PC-9 (cell line): ENCODE measurements at regions of chr14 and their contacts with region 1.

Region 1: GRCh38 chr14:69153131-69153872 is 383 bp upstream of the DCAF5 start:
- DNase-seq: peak; percentile 83 to 92
- H3K4me3 ChIP-seq: peak overlapping the region; percentile 95
- H3K27ac ChIP-seq: no peak overlapping the region
- H3K4me1 ChIP-seq: peaks cover 17% of the 10 kb centered on the region
- H3K27me3 ChIP-seq: no peaks in the 10 kb centered on the region
- CTCF ChIP-seq: no peak

Region 2: DNA sequence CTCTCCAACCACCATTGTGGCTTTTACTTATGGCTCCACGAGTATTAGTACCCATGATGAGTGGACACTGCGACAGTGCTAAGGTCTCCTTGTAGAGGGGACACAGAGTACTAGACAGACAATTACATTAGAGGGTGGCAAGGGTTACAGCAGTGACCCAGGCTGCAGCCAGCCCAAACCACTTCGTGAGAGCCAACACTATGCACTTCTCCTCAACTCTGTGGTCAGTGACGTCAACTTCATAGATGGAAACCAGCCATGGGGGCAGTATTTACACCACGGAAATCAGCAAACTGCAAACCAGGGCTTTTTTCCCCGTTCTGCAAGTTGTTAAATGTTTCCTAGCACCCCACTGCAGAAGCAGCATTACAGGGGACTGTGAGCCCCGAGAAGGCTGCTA is 298.9 kb before region 1 on chr14:
- CTCF ChIA-PET with region 1: no interaction called
- POLR2A ChIA-PET with region 1: no interaction called
- intact Hi-C with region 1: no loop called
- DNase-seq: no peak
- H3K4me3 ChIP-seq: no peak overlapping the region
- H3K27ac ChIP-seq: no peak overlapping the region
- H3K4me1 ChIP-seq: peaks cover 24% of the 10 kb centered on the region
- H3K27me3 ChIP-seq: no peaks in the 10 kb centered on the region
- CTCF ChIP-seq: no peak

Region 3: DNA sequence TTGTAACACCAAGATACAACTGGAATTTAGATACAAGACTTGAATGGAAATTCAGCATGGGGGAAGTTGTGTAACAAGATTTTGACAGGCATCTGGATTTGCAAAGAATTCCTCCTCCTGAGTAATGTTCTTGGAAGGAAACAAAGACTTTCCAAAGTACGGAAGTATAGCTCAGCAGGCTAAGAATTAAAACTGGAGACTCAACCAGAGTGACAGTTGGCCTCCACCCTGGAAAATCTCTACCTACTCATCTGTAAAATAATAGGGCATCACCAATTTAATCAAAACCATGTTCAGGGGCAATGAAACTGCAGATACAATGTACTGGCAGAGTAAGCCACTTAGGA is 15.1 kb before region 1 on chr14:
- CTCF ChIA-PET with region 1: interaction called, 13 read pairs
- POLR2A ChIA-PET with region 1: no interaction called
- intact Hi-C with region 1: no loop called
- DNase-seq: no peak
- H3K4me3 ChIP-seq: no peak overlapping the region
- H3K27ac ChIP-seq: no peak overlapping the region
- H3K4me1 ChIP-seq: peaks cover 15% of the 10 kb centered on the region
- H3K27me3 ChIP-seq: no peaks in the 10 kb centered on the region
- CTCF ChIP-seq: no peak

Region 4: DNA sequence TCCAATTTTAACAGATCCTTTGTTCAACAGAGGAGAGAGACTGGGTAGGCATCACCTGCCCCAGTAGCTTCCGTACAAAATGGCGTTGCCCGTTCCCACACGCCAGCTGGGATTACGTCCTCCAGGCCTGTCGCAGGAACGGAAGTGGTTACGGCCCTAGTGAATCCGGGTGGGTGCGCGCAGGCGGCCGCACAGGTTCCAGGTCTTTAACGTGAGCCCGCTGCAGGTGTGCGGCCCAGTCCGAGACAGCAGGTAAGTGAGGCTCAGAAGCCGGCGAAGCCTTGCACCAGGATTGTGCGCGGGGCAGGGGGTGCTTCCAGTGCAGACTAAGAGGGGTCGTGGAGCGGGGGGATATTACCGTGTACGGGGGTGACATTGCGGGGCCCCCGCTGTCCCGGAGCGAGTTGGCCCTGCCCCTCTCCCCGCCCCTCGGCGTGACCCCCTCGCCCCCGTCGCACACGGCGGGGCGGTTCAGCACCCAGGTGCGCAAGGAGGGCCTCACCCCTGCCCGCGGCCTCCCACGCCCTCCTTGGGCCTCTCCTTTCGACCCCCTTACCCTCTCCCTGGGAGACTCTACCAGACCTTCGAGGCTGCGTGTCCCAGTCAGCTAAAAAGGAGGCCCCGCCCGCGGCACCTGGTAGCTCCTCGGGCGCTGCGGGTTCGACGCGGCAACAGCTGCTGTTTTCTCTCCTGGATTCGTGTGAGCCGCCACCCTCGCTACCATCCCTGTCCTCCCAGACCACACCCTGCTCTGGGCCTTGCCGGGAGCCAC is 38.2 kb after region 1 on chr14 and contains the start of gene EXD2:
- CTCF ChIA-PET with region 1: no interaction called
- POLR2A ChIA-PET with region 1: interaction called, 3 read pairs
- intact Hi-C with region 1: loop called (anchors 2 kb)
- DNase-seq: peak; percentile 89 to 93
- H3K4me3 ChIP-seq: peak within 1 kb of the TSS; percentile 67
- H3K27ac ChIP-seq: peak within 1 kb of the TSS; percentile 36
- H3K4me1 ChIP-seq: peaks cover 16% of the 10 kb centered on the region
- H3K27me3 ChIP-seq: no peaks in the 10 kb centered on the region
- CTCF ChIP-seq: no peak
- total RNA-seq, gene EXD2: 21.4 and 25.5 TPM in 2 replicates

Region 5: GRCh38 chr14:69299286-69300035 is 146.2 kb after region 1 on chr14:
- CTCF ChIA-PET with region 1: interaction called, 12 read pairs
- POLR2A ChIA-PET with region 1: no interaction called
- intact Hi-C with region 1: no loop called
- DNase-seq: peak in 1 of 2 experiments; percentile 10
- H3K4me3 ChIP-seq: no peak overlapping the region
- H3K27ac ChIP-seq: no peak overlapping the region
- H3K4me1 ChIP-seq: no peaks in the 10 kb centered on the region
- H3K27me3 ChIP-seq: peaks cover 22% of the 10 kb centered on the region
- CTCF ChIP-seq: no peak